ENCODE measurements at regions of chr1 and their contacts with region 1.

Region 1: GRCh38 chr1:52904927-52905698 is 16.4 kb downstream of the ECHDC2 start:
- DNase-seq: peak in 6 of 9 experiments; percentile 33 to 57 (median 47)
- ATAC-seq: peak; percentile 76
- H3K4me3 ChIP-seq: no peak overlapping the region
- H3K4me3 Mint-ChIP-seq: no peak overlapping the region
- H3K27ac ChIP-seq: no peak overlapping the region
- H3K27ac Mint-ChIP-seq: no peak overlapping the region
- H3K4me1 ChIP-seq: no peaks in the 10 kb centered on the region
- H3K4me1 Mint-ChIP-seq: no peaks in the 10 kb centered on the region
- H3K27me3 ChIP-seq: no peaks in the 10 kb centered on the region
- H3K27me3 Mint-ChIP-seq: no peaks in the 10 kb centered on the region
- CTCF ChIP-seq: no peak

Region 2: GRCh38 chr1:52920791-52921291 is 15.7 kb after region 1 on chr1:
- CTCF ChIA-PET with region 1: interaction called, 11 read pairs
- POLR2A ChIA-PET with region 1: no interaction called
- intact Hi-C with region 1: no loop called
- DNase-seq: peak in 1 of 9 experiments; percentile 33
- ATAC-seq: no peak
- H3K4me3 ChIP-seq: peak overlapping the region; percentile 18 to 60
- H3K4me3 Mint-ChIP-seq: peak overlapping the region; percentile 69
- H3K27ac ChIP-seq: peak overlapping the region; percentile 32 to 78
- H3K27ac Mint-ChIP-seq: peak overlapping the region; percentile 60
- H3K4me1 ChIP-seq: peaks cover 21% of the 10 kb centered on the region
- H3K4me1 Mint-ChIP-seq: peaks cover 31% of the 10 kb centered on the region
- H3K27me3 ChIP-seq: no peaks in the 10 kb centered on the region
- H3K27me3 Mint-ChIP-seq: no peaks in the 10 kb centered on the region
- CTCF ChIP-seq: no peak

Region 3: DNA sequence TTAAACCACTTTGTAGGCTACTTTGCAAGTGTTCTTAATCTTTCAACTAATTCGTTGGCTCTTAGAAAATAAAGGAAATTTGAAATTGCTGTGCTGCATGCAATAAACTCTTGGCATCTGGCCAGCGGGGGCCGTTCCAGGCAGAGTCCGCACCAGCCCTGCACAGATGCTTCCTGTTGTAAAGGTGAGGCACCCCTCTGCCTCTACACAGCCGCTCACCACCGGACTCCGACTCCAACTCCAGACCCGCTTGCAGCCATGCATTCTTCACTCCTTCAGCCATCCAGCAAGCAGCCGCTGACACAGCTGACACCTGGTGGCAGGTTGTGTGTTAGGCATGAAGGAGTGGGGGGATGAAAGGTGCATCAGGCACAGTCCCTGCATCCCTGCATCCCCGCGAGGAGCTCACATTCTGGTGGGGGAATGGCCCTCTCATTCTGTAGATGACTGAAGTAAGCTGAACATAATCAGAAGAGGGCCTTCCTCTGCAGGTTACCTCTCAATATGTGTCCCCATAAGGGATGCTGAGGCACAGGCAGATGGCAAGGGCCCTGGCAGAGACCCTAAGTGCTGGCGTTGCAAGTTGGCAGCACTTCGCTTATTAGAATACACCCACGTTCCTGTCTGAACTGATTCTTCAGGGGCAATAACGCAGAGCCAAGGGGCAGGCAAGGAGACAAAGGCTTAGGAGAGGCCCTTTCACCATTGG is 777.0 kb after region 1 on chr1:
- CTCF ChIA-PET with region 1: no interaction called
- POLR2A ChIA-PET with region 1: no interaction called
- intact Hi-C with region 1: no loop called
- DNase-seq: peak; percentile 5 to 68 (median 40)
- ATAC-seq: peak; percentile 62
- H3K4me3 ChIP-seq: peak overlapping the region in 1 of 2 experiments; percentile 2
- H3K4me3 Mint-ChIP-seq: peak overlapping the region; percentile 67
- H3K27ac ChIP-seq: no peak overlapping the region
- H3K27ac Mint-ChIP-seq: no peak overlapping the region
- H3K4me1 ChIP-seq: peaks cover 10% of the 10 kb centered on the region
- H3K4me1 Mint-ChIP-seq: peaks cover 11% of the 10 kb centered on the region
- H3K27me3 ChIP-seq: no peaks in the 10 kb centered on the region
- H3K27me3 Mint-ChIP-seq: peaks cover 9% of the 10 kb centered on the region
- CTCF ChIP-seq: peak; percentile 45

Measured in CD8-positive, alpha-beta T cell (primary cell).